Esophagus squamous epithelium (tissue), 5 donors: ENCODE measurements at regions of chr19 and their contacts with region 1.

Region 1: DNA sequence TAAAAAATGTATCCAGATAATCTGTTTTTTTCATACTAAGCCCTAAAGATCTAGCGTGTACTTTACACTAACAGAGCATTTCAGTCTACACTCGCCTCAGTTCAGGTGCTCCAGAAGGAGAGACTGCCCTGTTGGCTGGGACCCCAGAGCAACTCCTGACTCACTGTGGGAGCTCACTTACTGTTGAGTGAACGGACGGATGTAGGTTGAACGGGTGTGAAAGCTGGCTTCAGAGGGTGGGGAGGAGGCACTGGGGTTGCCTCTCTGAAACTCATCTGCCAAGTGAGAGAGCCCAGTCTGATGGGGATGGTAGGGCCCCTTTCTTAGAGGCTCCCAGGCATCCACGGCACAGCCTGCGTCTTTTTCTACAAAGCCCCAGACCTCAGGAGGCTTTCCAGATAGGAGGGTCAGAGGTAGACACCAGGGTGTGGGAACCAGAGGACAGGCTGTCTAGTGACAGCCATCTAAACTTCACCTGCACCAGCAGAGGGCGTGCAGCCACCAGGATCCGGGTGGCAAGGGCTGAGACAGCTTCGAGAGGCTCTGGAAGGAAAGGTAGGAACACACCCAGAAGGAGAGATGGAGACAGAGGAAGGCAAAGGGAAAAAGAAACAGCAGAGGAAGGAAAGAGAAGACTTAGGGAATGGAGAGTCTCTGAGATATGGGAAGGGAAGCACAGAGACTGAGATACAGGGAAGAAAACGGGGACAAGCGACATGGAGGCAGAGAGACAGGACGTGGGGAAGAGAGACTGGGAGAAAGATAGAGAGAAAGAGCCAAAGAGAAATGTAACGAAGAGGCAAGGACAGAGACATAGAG is 3.7 kb downstream of the KASH5 start:
- DNase-seq: no peak
- H3K4me3 ChIP-seq: no peak overlapping the region
- H3K27ac ChIP-seq: no peak overlapping the region
- H3K4me1 ChIP-seq: peaks cover 0 to 3% (median 0%) of the 10 kb centered on the region in 3 donors
- H3K27me3 ChIP-seq: peaks cover 0 to 49% (median 1%) of the 10 kb centered on the region in 4 donors
- CTCF ChIP-seq: peak; percentile 62 to 88 (median 84)
- POLR2A ChIP-seq: no peak

Region 2: DNA sequence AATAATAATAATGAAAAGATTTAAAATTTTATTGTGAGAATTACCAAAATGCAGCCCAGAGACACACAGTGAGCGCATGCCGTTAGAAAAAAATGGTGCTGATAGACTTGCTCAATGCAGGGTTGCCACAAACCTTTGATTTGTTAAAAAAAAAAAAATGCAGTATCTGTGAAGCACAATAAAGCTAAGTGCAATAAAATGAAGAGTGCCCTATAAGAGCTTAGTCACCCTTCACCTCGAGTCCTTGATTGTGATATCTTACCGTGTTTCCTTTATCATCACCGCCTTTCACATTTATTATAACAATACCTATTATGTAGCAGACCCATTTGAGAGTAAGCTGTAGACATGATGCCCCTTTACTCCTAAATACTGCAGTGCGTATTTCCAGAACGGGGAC is 150.0 kb before region 1 on chr19:
- intact Hi-C with region 1: no loop called
- DNase-seq: no peak
- H3K4me3 ChIP-seq: no peak overlapping the region
- H3K27ac ChIP-seq: no peak overlapping the region
- H3K4me1 ChIP-seq: no peaks in the 10 kb centered on the region
- H3K27me3 ChIP-seq: no peaks in the 10 kb centered on the region
- CTCF ChIP-seq: no peak
- POLR2A ChIP-seq: no peak

Region 3: GRCh38 chr19:49443366-49444099 is 51.7 kb after region 1 on chr19:
- intact Hi-C with region 1: loop called (anchors 2 kb)
- DNase-seq: peak; percentile 68
- H3K4me3 ChIP-seq: peak overlapping the region; percentile 70 to 88 (median 80)
- H3K27ac ChIP-seq: peak overlapping the region; percentile 85 to 93 (median 91)
- H3K4me1 ChIP-seq: peaks cover 7 to 53% (median 18%) of the 10 kb centered on the region in 3 donors
- H3K27me3 ChIP-seq: peaks cover 3 to 45% (median 13%) of the 10 kb centered on the region in 4 donors
- CTCF ChIP-seq: peak; percentile 73 to 95 (median 88)
- POLR2A ChIP-seq: no peak